SK-N-SH (cell line): ENCODE measurements at regions of chr1 and their contacts with region 1.

Region 1: GRCh38 chr1:9701661-9702060 is 50.1 kb downstream of the PIK3CD start:
- DNase-seq: no peak
- H3K4me3 ChIP-seq: no peak overlapping the region
- H3K27ac ChIP-seq: no peak overlapping the region
- H3K4me1 ChIP-seq: peaks cover 0 to 6% of the 10 kb centered on the region in 2 experiments; a peak in 1 of 4 replicates
- H3K27me3 ChIP-seq: no peaks in the 10 kb centered on the region
- CTCF ChIP-seq: no peak
- EP300 ChIP-seq: no peak
- RAD21 ChIP-seq: no peak

Region 2: DNA sequence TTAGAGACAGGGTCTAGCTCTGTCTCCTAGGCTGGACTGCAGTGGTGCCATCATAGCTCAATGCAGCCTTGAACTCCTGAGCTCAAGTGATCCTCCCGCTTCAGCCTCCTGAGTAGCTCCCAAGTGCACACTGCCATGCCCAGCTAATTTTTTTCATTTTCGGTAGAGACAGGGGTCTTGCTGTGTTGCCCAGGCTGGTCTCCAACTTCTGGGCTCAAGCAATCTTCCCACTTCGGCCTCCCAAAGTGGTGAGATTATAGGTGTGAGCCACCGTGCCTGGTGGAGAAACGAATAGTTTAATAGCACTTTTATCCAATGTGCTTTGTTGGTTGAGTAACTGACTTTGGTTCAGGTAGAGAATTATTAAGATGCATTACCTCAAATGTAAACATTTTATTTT is 29.2 kb before region 1 on chr1:
- CTCF ChIA-PET with region 1: no interaction called
- POLR2A ChIA-PET with region 1: no interaction called
- DNase-seq: no peak
- H3K4me3 ChIP-seq: no peak overlapping the region
- H3K27ac ChIP-seq: no peak overlapping the region
- H3K4me1 ChIP-seq: no peaks in the 10 kb centered on the region
- H3K27me3 ChIP-seq: no peaks in the 10 kb centered on the region
- CTCF ChIP-seq: no peak
- EP300 ChIP-seq: no peak
- RAD21 ChIP-seq: no peak

Region 3: DNA sequence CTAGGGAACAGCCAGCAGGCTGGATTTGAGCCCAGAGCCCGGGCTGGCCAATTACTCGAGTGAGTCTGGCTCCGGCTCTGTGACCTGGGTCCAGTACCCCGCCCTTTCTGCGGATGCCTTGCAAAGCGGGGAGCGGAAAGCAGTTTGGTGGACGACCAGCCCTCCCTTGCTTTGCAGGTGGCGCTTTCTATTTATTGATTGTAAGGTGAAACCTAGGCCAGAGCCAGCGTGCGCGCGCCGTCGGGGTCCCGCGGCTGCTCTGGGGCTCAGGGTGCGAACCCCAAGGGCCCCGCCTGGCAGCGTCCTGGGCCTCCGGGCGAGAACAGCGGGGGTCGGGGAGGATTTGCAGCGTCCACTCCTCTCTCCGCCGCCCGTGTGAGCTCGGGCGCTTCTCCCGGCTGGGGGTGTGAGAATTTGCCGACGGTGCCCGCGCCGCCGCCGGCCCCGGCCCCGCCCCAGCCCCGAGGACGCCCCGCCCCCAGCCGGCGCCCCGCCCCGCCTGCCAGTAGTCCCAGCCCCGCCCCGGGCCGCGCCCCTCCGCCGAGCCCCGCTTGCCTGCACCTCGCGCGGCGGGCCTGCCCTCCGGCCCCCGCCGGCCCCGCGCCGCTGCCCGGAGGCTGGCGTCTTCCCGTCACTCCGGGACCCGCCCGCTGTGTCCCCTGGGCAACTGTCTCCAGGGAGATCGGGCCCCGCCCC is 12.5 kb before region 1 on chr1:
- CTCF ChIA-PET with region 1: interaction called, 10 read pairs
- POLR2A ChIA-PET with region 1: no interaction called
- DNase-seq: peak; percentile 94
- H3K4me3 ChIP-seq: peak overlapping the region; percentile 63
- H3K27ac ChIP-seq: no peak overlapping the region
- H3K4me1 ChIP-seq: peaks cover 0 to 18% of the 10 kb centered on the region in 2 experiments; a peak in 2 of 4 replicates
- H3K27me3 ChIP-seq: no peaks in the 10 kb centered on the region
- CTCF ChIP-seq: no peak
- EP300 ChIP-seq: no peak
- RAD21 ChIP-seq: no peak

Region 4: DNA sequence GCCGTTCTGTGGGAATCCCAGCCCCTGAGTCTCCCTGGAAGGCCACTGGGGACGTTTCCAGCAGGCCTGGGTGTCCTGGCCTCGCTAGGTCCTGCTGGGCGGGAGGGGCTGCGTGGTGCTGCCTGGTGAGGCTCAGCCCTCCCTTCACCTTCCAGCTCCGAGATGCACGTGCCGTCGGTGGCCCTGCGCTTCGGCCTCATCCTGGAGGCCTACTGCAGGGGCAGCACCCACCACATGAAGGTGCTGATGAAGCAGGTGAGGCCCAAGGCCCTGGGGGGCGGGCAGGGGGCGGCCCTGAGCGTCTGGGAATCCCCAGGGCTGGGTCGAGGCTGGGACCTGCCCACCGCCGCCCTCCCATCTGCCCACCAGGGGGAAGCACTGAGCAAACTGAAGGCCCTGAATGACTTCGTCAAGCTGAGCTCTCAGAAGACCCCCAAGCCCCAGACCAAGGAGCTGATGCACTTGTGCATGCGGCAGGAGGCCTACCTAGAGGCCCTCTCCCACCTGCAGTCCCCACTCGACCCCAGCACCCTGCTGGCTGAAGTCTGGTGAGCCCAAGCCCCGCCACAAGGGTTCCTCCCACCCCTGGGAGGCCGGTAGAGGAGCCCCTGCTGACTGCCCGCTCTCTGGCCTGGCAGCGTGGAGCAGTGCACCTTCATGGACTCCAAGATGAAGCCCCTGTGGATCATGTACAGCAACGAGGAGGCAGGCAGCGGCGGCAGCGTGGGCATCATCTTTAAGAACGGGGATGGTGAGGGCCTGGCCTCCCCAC is 20.1 kb after region 1 on chr1:
- CTCF ChIA-PET with region 1: interaction called, 10 read pairs
- POLR2A ChIA-PET with region 1: no interaction called
- DNase-seq: peak; percentile 87
- H3K4me3 ChIP-seq: no peak overlapping the region; a peak in 1 of 4 replicates
- H3K27ac ChIP-seq: no peak overlapping the region
- H3K4me1 ChIP-seq: peaks cover 2 to 9% of the 10 kb centered on the region in 2 experiments; a peak in 2 of 4 replicates
- H3K27me3 ChIP-seq: no peaks in the 10 kb centered on the region
- CTCF ChIP-seq: peak; percentile 62
- EP300 ChIP-seq: no peak
- RAD21 ChIP-seq: no peak